A673 (cell line): ENCODE measurements at regions of chr2 and their contacts with region 1.

Region 1: GRCh38 chr2:30208452-30208851 is 22.9 kb upstream of the LBH start:
- DNase-seq: peak; percentile 89
- H3K4me3 ChIP-seq: no peak overlapping the region
- H3K27ac ChIP-seq: no peak overlapping the region
- H3K4me1 ChIP-seq: peaks cover 14% of the 10 kb centered on the region
- H3K27me3 ChIP-seq: no peaks in the 10 kb centered on the region
- CTCF ChIP-seq: peak; percentile 88

Region 2: DNA sequence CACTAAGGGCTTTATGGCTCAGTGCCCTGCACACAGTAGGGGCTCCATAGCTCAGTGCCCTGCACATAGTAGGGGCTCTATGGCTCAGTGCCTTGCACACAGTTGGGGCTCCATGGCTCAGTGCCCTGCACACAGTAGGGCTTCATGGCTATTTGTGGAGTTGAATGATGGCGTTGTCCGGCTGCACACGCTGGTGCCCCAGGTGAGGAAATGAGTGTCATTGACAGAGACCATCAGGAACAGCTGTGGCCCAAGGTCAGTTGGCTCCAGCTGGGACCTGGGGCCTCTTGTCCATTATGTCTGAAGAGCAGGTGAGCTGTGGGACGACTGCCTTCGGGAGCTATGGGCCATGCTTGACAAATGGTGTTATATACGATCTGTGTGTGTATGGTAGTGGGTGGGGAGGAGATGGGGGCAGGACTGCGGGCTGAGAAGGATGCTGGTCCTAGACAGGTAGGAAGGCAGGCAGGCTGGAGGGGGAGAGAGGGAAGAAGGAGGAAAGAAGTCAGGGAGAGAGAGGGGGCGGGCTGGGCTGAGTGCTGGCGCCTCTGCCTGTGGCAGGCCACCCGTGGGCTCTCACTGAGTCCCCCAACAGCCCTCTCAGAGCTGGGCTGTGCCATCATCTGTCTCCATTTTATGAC is 962.6 kb before region 1 on chr2:
- CTCF ChIA-PET with region 1: no interaction called
- POLR2A ChIA-PET with region 1: no interaction called
- intact Hi-C with region 1: no loop called
- DNase-seq: peak; percentile 10
- H3K4me3 ChIP-seq: no peak overlapping the region
- H3K27ac ChIP-seq: no peak overlapping the region
- H3K4me1 ChIP-seq: peaks cover 17% of the 10 kb centered on the region
- H3K27me3 ChIP-seq: no peaks in the 10 kb centered on the region
- CTCF ChIP-seq: no peak

Region 3: GRCh38 chr2:29657674-29658073 is 550.8 kb before region 1 on chr2:
- CTCF ChIA-PET with region 1: no interaction called
- POLR2A ChIA-PET with region 1: no interaction called
- intact Hi-C with region 1: no loop called
- DNase-seq: no peak
- H3K4me3 ChIP-seq: no peak overlapping the region
- H3K27ac ChIP-seq: no peak overlapping the region
- H3K4me1 ChIP-seq: no peaks in the 10 kb centered on the region
- H3K27me3 ChIP-seq: no peaks in the 10 kb centered on the region
- CTCF ChIP-seq: no peak

Region 4: DNA sequence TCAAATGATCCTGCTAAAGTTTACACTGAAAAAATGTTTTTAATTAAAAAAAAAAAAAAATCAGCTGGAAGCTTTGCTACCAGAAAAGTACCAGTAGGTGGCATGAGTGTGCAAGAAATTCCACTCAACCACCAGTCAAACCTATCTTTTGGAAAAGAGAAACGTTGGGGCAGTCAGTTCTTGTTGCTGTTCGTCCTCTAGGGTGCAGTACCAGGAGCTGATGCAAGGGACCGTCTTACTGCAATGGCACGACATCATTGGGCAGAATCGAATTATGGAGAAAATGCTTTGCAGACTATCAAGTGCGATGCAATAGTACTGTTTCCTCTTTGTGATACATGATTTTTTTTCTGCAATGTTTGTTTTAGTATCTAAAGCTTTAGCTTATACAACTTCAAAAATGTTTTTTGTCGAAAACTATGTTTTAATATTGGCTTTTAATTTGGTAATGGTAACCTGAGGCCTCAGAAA is 43.4 kb before region 1 on chr2:
- CTCF ChIA-PET with region 1: interaction called, 10 read pairs
- POLR2A ChIA-PET with region 1: interaction called, 3 read pairs
- intact Hi-C with region 1: loop called (anchors 2 kb)
- DNase-seq: peak; percentile 96
- H3K4me3 ChIP-seq: no peak overlapping the region
- H3K27ac ChIP-seq: peak overlapping the region; percentile 13
- H3K4me1 ChIP-seq: peaks cover 25% of the 10 kb centered on the region
- H3K27me3 ChIP-seq: no peaks in the 10 kb centered on the region
- CTCF ChIP-seq: peak; percentile 97

Region 5: DNA sequence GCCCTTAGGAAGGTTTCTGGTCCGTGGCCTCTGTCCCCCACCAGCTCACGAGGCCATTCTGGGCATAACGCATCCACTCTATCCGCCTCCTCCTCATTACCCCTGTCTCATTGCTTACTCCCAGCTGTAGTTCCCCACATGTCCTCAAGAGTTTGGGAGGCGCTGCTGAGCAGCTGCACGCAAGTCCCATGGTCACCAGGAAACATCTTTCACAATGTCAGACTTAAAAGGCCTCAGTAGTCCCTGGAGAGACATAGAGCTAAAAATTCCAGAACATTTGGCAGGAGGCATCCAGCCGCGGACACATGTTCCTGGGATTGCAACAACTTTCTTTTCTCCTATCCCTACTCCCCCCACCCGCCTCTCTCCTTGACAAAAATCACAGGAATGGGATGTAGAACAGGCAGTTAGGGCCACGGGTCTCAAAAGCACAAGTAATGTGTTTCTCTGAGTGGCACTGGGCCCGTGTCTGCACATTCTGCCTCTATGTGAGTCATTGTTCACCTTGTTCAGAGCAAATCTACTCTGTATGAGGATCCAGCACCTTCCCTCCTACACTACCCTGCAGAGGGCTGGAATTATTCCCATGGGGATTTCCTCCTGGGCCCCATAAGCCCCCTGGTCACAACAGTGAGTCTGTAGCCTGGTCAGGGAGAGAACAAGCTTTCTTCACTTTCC is 31.0 kb after region 1 on chr2:
- CTCF ChIA-PET with region 1: interaction called, 10 read pairs
- POLR2A ChIA-PET with region 1: no interaction called
- intact Hi-C with region 1: no loop called
- DNase-seq: peak; percentile 88
- H3K4me3 ChIP-seq: no peak overlapping the region
- H3K27ac ChIP-seq: peak overlapping the region; percentile 17
- H3K4me1 ChIP-seq: peaks cover 16% of the 10 kb centered on the region
- H3K27me3 ChIP-seq: no peaks in the 10 kb centered on the region
- CTCF ChIP-seq: peak; percentile 95

Region 6: GRCh38 chr2:30862054-30862651 is 653.7 kb after region 1 on chr2:
- CTCF ChIA-PET with region 1: no interaction called
- POLR2A ChIA-PET with region 1: interaction called, 10 read pairs
- intact Hi-C with region 1: no loop called
- DNase-seq: peak; percentile 85
- H3K4me3 ChIP-seq: no peak overlapping the region
- H3K27ac ChIP-seq: no peak overlapping the region
- H3K4me1 ChIP-seq: no peaks in the 10 kb centered on the region
- H3K27me3 ChIP-seq: no peaks in the 10 kb centered on the region
- CTCF ChIP-seq: peak; percentile 74